ENCODE measurements at regions of chr14 and their contacts with region 1.

Region 1: DNA sequence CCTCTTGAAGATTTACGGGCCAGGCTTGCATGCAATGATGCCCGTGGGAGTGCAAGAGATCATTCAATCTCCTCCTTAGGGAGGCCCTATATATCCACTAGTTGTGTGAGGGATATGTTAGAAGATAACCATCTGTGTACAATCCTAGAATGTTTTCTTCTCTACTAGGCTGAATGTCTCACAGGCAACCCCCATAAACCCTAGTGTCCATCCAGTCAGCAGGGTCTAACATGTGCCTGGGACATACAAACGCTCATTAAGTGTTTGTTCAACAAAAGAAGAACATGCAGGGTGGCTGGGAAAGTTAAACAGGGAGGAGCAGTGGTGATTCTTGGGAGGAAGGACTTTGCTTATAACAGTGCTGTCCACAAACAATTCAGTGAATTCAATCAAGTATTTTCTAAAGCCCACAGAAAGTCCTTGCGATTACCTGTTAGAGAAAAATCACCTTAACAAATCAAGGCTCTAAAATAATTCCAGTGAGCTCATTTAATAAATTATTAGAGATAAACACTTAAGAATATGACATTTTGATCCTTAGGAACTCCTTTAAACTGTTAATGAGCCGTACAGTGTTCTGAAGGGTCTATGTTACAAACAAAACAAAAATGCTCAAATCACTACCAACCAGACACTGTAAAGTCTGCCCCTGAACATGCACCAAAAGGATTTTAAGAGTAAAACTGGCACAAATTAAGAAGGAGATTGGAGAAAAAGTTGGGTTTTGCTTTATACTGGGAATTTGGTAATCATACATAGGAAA is 96.6 kb upstream of the FERMT2 start:
- DNase-seq: no peak
- ATAC-seq: no peak
- H3K4me3 ChIP-seq: no peak overlapping the region
- H3K27ac ChIP-seq: no peak overlapping the region
- H3K4me1 ChIP-seq: no peaks in the 10 kb centered on the region
- H3K27me3 ChIP-seq: no peaks in the 10 kb centered on the region
- CTCF ChIP-seq: no peak

Region 2: DNA sequence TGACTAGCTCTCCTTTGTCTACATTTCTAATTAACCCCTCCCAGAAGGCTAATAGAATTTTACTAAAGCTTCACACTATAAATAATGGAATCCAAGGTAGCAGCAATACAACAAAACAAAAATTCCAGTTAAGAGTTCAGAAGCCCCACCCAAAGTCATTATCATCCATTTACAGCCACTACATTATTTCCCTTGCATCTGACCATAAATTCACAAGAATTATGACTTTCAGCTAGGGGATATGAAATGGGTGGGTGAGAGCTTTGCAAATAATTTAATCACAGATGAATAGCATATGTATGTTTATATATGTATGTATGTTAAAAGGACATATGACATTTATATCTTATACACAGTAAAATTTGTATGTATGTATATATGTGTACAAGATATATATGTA is 845.3 kb before region 1 on chr14:
- intact Hi-C with region 1: no loop called
- DNase-seq: no peak
- ATAC-seq: no peak
- H3K4me3 ChIP-seq: no peak overlapping the region
- H3K27ac ChIP-seq: no peak overlapping the region
- H3K4me1 ChIP-seq: no peaks in the 10 kb centered on the region
- H3K27me3 ChIP-seq: no peaks in the 10 kb centered on the region
- CTCF ChIP-seq: no peak

Region 3: GRCh38 chr14:52547526-52547925 is 500.0 kb before region 1 on chr14:
- intact Hi-C with region 1: no loop called
- DNase-seq: no peak
- ATAC-seq: no peak
- H3K4me3 ChIP-seq: no peak overlapping the region
- H3K27ac ChIP-seq: no peak overlapping the region
- H3K4me1 ChIP-seq: peaks cover 17% of the 10 kb centered on the region
- H3K27me3 ChIP-seq: no peaks in the 10 kb centered on the region
- CTCF ChIP-seq: no peak

Region 4: DNA sequence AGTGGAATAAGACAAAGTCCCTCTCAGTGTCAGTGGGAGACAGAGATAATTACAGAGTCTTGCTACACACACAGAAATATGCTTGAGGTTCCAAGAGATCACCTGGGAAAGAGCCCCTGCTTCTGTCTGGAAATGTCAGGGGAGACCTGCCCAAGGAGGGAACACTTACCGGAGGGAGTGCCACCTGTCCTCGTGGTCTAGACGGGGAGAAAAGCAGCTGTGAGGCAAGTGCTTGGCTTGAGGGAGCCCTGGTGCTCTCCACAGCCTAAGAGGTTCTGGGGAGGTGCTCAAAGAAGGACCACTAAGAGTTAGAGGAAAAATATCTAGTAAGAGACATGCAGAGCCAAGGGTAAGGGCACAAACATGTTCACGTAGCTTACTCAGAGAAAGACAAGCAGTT is 218.0 kb before region 1 on chr14:
- intact Hi-C with region 1: loop called in 1 of 2 experiments (anchors 2 kb)
- DNase-seq: no peak
- ATAC-seq: no peak
- H3K4me3 ChIP-seq: no peak overlapping the region
- H3K27ac ChIP-seq: no peak overlapping the region
- H3K4me1 ChIP-seq: no peaks in the 10 kb centered on the region
- H3K27me3 ChIP-seq: no peaks in the 10 kb centered on the region
- CTCF ChIP-seq: no peak

Measured in psoas muscle (tissue), 8 donors.